Activated CD4-positive, alpha-beta memory T cell treated with anti-CD3 and anti-CD28 coated beads for 36 hours (primary cell): ENCODE measurements at regions of chr7 and their contacts with region 1.

Region 1: DNA sequence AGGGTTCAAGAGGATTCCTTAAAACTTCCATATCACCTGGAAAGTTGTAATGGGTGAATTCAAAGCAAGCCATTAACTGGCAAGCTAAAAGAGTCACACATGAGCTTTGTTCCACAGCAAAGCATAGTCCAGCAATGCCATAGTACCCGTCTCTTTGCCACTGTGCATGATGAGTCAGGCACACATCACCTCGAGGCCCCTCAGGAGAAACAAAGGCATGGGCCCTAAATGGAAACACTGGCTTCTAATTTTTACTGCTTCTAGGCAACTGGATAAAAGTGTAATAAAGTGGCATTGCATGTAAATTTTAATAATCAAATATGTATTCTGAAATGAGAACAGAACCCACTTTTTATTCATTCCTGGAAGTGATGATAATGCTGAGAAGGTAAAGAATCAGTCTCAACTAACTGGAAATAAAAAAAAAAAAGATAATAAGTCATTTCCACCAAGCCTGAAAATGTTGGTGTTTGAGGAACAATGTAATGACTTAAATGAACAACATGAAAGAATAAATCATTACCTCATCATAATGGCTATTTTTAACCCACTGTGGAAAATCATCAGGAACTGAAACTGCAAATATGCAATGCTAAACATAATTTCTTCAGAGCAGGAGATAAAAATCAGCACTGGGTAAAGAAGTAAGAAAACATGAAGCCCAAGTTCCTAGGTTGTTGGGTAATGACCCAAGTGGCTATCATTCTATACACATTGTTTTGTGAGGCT is 104.9 kb downstream of the CDK6 start:
- DNase-seq: peak; percentile 71
- H3K4me3 Mint-ChIP-seq: peak overlapping the region; percentile 10
- H3K27ac Mint-ChIP-seq: peak overlapping the region; percentile 96
- H3K4me1 Mint-ChIP-seq: peaks cover 71% of the 10 kb centered on the region
- H3K27me3 Mint-ChIP-seq: no peaks in the 10 kb centered on the region

Region 2: GRCh38 chr7:92641921-92642511 is 89.5 kb before region 1 on chr7:
- CTCF ChIA-PET with region 1: no interaction called
- POLR2A ChIA-PET with region 1: no interaction called
- intact Hi-C with region 1: loop called (anchors 2 kb)
- DNase-seq: peak; percentile 84
- H3K4me3 Mint-ChIP-seq: peak overlapping the region; percentile 9
- H3K27ac Mint-ChIP-seq: peak overlapping the region; percentile 96
- H3K4me1 Mint-ChIP-seq: peaks cover 86% of the 10 kb centered on the region
- H3K27me3 Mint-ChIP-seq: no peaks in the 10 kb centered on the region

Region 3: DNA sequence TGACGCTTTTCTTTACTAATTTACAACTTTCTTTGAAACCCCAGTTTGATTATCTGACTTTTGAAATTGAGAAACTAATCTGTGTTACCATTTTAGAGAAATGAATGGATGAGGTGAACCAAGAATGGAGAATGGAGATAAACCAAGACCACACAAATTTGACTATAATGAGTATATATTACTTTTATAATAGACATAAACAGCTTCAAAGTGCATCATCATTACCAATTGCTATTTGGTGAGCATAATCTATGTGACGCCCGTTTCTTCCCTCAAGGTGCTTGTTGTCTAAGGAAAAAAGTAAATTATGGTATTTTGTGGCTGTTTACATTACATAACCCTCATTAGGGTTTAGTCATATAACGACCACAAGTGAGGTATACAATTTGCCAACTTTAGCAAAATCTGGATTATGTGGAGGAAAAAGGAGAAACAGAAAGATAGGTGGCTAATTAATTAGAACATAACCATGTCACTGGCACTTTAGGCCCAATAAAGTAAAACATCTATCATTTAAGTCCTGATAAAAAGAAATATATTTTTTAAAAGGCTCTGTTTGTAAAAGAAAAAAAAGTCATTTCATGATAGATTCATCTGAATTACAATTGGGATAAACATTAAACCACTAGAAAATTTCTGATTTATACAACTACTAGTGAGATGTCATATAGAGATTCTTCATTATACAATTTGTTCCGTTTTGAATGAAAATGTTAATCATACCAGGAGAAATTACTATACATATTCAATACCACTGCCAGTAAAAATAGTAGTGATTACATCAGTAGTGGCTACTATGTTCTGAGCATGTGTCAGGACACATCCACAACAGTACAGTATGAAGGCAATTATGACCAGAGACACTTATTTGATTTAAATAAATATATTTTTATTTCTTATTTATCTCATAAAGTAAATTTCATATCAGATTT is 23.1 kb before region 1 on chr7:
- CTCF ChIA-PET with region 1: interaction called, 5 read pairs
- POLR2A ChIA-PET with region 1: interaction called, 4 read pairs
- intact Hi-C with region 1: loop called (anchors 1 kb)
- DNase-seq: no peak
- H3K4me3 Mint-ChIP-seq: no peak overlapping the region
- H3K27ac Mint-ChIP-seq: peak overlapping the region; percentile 88
- H3K4me1 Mint-ChIP-seq: peaks cover 55% of the 10 kb centered on the region
- H3K27me3 Mint-ChIP-seq: no peaks in the 10 kb centered on the region

Region 4: GRCh38 chr7:92751902-92752901 is 20.7 kb after region 1 on chr7:
- CTCF ChIA-PET with region 1: no interaction called
- POLR2A ChIA-PET with region 1: interaction called, 3 read pairs
- intact Hi-C with region 1: loop called (anchors 1 kb)
- DNase-seq: no peak
- H3K4me3 Mint-ChIP-seq: no peak overlapping the region
- H3K27ac Mint-ChIP-seq: peak overlapping the region; percentile 72
- H3K4me1 Mint-ChIP-seq: peaks cover 63% of the 10 kb centered on the region
- H3K27me3 Mint-ChIP-seq: no peaks in the 10 kb centered on the region

Region 5: DNA sequence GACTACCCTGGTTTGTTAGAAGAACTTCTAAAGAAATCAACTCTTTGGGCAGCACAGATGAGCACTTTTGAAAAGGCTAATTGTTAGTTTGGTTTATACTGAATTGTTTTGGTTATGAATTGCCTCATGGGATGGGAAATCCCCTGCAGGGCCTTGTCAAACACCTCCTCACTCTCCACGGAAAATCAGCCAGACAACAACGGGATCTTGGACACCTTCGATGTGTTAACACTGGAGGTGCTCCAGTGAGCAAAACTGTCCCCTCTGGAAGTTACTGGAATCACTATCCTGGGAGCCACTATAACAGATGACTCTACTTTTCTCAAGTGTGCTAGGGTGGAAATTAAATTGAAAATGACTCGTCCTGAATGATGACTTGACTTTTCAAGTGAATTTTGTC is 66.2 kb after region 1 on chr7:
- CTCF ChIA-PET with region 1: no interaction called
- POLR2A ChIA-PET with region 1: no interaction called
- intact Hi-C with region 1: loop called (anchors 2 kb)
- DNase-seq: peak; percentile 64
- H3K4me3 Mint-ChIP-seq: no peak overlapping the region
- H3K27ac Mint-ChIP-seq: no peak overlapping the region
- H3K4me1 Mint-ChIP-seq: peaks cover 32% of the 10 kb centered on the region
- H3K27me3 Mint-ChIP-seq: no peaks in the 10 kb centered on the region